MCF 10A (cell line): ENCODE measurements at regions of chr7 and their contacts with region 1.

Region 1: GRCh38 chr7:16071246-16071857 is 350.0 kb downstream of the CRPPA start:
- DNase-seq: peak; percentile 61
- H3K4me3 Mint-ChIP-seq: no peak overlapping the region
- H3K27ac Mint-ChIP-seq: no peak overlapping the region
- H3K4me1 Mint-ChIP-seq: peaks cover 4% of the 10 kb centered on the region
- H3K27me3 Mint-ChIP-seq: peaks cover 42% of the 10 kb centered on the region
- CTCF ChIP-seq: peak; percentile 71

Region 2: DNA sequence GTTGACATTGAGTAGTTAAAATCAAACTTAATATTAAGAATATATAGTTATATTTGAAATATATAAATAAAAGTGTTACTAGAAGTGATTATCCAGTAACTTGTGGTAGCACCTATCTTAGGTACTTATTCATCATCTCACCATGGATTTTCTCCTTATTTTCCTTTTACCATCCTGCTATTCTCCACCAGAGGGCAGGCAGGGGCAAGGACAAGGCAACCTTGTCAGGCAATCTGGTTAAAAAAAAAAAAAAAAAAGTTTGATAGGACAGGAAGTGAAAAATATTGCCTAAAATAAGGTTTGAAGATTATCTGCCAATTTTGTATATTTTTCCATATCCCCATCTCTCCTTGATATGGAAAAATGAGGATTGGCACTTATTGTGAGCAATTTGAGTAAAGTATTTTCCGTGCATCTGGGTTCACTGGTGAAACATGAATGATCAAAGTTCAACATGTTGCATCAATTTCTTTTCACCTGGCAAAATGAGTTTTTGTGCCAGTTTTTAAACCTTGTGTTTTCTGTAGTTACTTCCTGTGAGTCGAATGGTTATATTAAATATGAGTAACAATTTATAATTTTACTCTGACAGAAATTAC is 766.3 kb before region 1 on chr7:
- CTCF ChIA-PET with region 1: interaction called, 3 read pairs
- POLR2A ChIA-PET with region 1: no interaction called
- intact Hi-C with region 1: loop called (anchors 1 kb)
- DNase-seq: peak; percentile 71
- H3K4me3 Mint-ChIP-seq: no peak overlapping the region
- H3K27ac Mint-ChIP-seq: no peak overlapping the region
- H3K4me1 Mint-ChIP-seq: no peaks in the 10 kb centered on the region
- H3K27me3 Mint-ChIP-seq: peaks cover 23% of the 10 kb centered on the region
- CTCF ChIP-seq: peak; percentile 63

Region 3: GRCh38 chr7:15963206-15963605 is 108.1 kb before region 1 on chr7:
- CTCF ChIA-PET with region 1: no interaction called
- POLR2A ChIA-PET with region 1: no interaction called
- intact Hi-C with region 1: no loop called
- DNase-seq: no peak
- H3K4me3 Mint-ChIP-seq: no peak overlapping the region
- H3K27ac Mint-ChIP-seq: no peak overlapping the region
- H3K4me1 Mint-ChIP-seq: no peaks in the 10 kb centered on the region
- H3K27me3 Mint-ChIP-seq: peaks cover 20% of the 10 kb centered on the region
- CTCF ChIP-seq: no peak

Region 4: GRCh38 chr7:15977663-15978062 is 93.7 kb before region 1 on chr7:
- CTCF ChIA-PET with region 1: no interaction called
- POLR2A ChIA-PET with region 1: no interaction called
- intact Hi-C with region 1: no loop called
- DNase-seq: no peak
- H3K4me3 Mint-ChIP-seq: no peak overlapping the region
- H3K27ac Mint-ChIP-seq: no peak overlapping the region
- H3K4me1 Mint-ChIP-seq: peaks cover 3% of the 10 kb centered on the region
- H3K27me3 Mint-ChIP-seq: peaks cover 41% of the 10 kb centered on the region
- CTCF ChIP-seq: no peak